AG04450 (cell line): ENCODE measurements at regions of chr5 and their contacts with region 1.

Region 1: GRCh38 chr5:140664359-140665119 is at the start of gene WDR55:
- DNase-seq: peak; percentile 70
- H3K4me3 ChIP-seq: peak within 1 kb of the TSS; percentile 95
- H3K27ac ChIP-seq: peak within 1 kb of the TSS; percentile 92
- H3K27me3 ChIP-seq: no peaks in the 10 kb centered on the region
- CTCF ChIP-seq: no peak
- polyA plus RNA-seq, gene WDR55: 13.6 and 14.3 TPM in 2 replicates

Region 2: DNA sequence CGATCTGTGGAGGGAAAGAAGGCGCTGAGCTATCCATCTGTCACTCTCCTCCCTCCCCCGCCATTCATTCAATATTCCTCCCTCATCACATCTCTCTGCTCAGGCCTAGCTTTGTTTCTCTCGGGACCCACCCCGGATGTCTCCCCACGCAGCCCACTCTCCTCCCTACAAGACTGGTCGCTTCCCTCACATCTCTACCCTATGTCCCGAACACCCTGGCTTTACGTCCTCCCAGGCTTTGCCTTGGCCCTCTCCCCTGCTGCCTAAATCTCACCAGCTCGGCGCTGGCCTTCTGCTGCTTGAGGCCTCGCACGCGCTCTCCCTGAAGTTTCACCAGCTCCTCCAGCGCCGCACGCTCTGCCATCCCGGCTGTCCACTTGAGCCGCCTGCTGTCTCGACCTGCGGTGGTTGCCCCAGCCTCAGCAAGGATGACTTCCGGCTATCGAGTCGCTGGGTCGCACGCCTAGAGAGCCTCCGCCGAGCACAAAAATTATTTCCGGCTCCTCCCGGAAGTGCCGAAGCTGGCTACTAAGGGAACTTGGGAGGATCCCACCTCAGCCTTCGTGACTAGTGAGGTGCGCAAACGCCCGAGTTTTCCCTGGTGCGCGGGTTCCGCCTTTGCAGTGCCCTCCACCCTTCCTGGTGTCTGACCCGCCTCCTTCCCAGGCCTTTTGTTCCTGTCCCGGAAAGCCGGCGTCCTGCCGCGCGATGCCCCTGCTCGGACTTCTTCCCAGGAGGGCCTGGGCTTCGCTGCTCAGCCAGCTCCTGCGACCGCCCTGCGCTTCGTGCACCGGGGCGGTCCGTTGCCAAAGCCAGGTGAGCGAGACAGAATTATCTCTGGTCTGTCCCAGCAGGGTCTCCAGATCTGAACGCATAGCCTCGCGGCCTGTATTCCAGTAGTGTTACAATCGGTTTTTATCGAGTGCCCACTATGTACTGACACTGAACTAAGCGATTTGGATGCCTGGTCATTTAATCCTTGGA is 26.7 kb after region 1 on chr5 and contains the starts of genes HARS1 and HARS2:
- CTCF ChIA-PET with region 1: no interaction called
- POLR2A ChIA-PET with region 1: interaction called, 11 read pairs
- DNase-seq: peak; percentile 86
- H3K4me3 ChIP-seq: peak within 1 kb of the TSS; percentile 99
- H3K27ac ChIP-seq: peak within 1 kb of the TSS; percentile 77
- H3K27me3 ChIP-seq: no peaks in the 10 kb centered on the region
- CTCF ChIP-seq: no peak
- polyA plus RNA-seq, gene HARS1: 93.6 and 98.8 TPM in 2 replicates
- polyA plus RNA-seq, gene HARS2: 39.9 and 48.6 TPM in 2 replicates